ENCODE measurements at regions of chr16 and their contacts with region 1.

Region 1: GRCh38 chr16:4734063-4734729 is at the starts of genes ANKS3 and DNAAF8:
- DNase-seq: peak; percentile 95 to 99 (median 97)
- ATAC-seq: peak; percentile 98 to 99 (median 98)
- H3K4me3 ChIP-seq: peak within 1 kb of the TSS; percentile 61 to 99 (median 91)
- H3K27ac ChIP-seq: peak within 1 kb of the TSS; percentile 47 to 90 (median 78)
- H3K4me1 ChIP-seq: peaks cover 0 to 17% (median 15%) of the 10 kb centered on the region in 12 donors
- H3K27me3 ChIP-seq: no peaks in the 10 kb centered on the region
- CTCF ChIP-seq: no peak
- POLR2A ChIP-seq: peak in 1 of 2 donors; percentile 56
- total RNA-seq, gene ANKS3: 5.1 to 12.5 (median 8.6) TPM
- total RNA-seq, gene DNAAF8: 0.34 to 3.4 (median 0.70) TPM

Region 2: GRCh38 chr16:4640572-4641305 is 93.5 kb before region 1 on chr16:
- intact Hi-C with region 1: no loop called
- DNase-seq: no peak
- ATAC-seq: peak in 2 of 4 donors; percentile 28 to 33
- H3K4me3 ChIP-seq: no peak overlapping the region
- H3K27ac ChIP-seq: peak overlapping the region in 4 of 12 donors; percentile 0 to 40 (median 20)
- H3K4me1 ChIP-seq: peaks cover 0 to 27% (median 8%) of the 10 kb centered on the region in 12 donors
- H3K27me3 ChIP-seq: no peaks in the 10 kb centered on the region
- CTCF ChIP-seq: no peak
- POLR2A ChIP-seq: no peak

Region 3: DNA sequence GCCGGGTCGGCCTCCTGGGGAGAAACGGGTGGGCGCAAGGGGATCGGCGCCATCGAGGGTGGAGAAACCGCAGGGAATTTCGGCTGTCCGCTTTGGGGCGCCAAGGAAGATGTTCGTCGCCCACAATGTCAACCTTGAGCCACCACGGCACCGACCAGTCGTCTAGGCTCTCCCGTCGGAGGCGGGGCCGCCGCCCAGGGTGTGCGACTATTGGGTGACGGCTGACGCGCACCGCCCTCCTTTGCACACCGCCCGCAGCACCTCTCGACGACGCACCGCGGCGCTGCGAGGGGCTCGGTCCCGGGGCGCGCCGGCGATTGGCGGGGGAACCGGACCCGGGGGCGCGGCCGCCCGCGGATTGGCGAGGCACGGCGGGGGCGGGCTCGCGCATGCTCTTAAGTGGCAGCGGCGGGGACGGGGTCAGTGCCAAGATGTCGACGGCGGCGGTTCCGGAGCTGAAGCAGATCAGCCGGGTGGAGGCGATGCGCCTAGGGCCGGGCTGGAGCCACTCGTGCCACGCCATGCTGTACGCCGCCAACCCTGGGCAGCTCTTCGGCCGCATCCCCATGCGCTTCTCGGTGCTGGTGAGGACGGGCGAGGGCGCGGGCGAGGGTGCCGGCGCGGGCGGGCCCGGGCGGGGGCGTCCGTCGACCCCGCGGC is 40.8 kb before region 1 on chr16 and contains the start of gene NUDT16L1:
- intact Hi-C with region 1: loop called in 2 of 10 experiments (anchors 2 to 5 kb)
- DNase-seq: peak; percentile 97 to 99 (median 98)
- ATAC-seq: peak; percentile 86 to 95 (median 90)
- H3K4me3 ChIP-seq: peak within 1 kb of the TSS; percentile 72 to 100 (median 96)
- H3K27ac ChIP-seq: peak within 1 kb of the TSS; percentile 61 to 96 (median 88)
- H3K4me1 ChIP-seq: peaks cover 5 to 46% (median 26%) of the 10 kb centered on the region in 12 donors
- H3K27me3 ChIP-seq: no peaks in the 10 kb centered on the region
- CTCF ChIP-seq: peak in 10 of 12 donors; percentile 13 to 62 (median 40)
- POLR2A ChIP-seq: peak; percentile 13 to 80
- total RNA-seq, gene NUDT16L1: 33.1 to 65.2 (median 46.4) TPM

Region 4: DNA sequence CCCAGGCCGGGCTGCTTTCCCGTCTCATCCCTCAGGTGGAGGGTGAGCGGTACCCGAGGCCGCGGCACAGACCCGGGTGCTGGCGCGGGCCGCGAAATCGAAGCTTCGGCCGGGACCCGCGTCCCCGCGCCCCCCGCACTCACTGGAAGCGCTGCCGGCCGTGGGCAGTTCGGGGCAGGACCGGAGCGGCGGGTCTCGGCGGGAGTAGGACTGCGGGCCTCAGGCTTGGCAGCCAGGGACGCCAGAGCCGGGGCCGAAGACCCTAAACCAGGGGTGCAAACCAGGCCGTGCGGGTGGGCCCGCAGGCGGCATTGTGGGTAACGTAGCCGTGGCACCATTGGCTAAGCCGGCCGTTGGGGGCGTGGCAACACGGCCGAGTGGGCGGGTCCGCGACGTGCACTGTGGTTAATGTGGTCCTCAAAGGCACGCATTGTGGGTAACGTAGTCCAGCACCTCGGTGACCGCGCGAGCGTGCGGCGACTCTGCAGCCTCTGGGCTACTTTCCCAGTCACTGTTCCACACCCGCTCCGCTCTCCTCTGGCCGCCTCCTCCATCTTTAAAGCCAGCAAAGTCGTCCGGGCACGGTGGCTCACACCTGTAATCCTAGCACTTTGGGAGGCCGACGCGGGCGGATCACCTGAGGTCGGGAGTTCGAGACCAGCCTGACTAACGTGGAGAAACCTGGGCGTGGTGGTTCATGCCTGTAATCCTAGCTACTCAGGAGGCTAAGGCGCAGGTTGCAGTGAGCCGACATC is 32.9 kb after region 1 on chr16 and contains the start of gene ZNF500:
- intact Hi-C with region 1: loop called in 3 of 10 experiments (anchors 1 to 2 kb)
- DNase-seq: peak; percentile 98 to 99 (median 98)
- ATAC-seq: peak; percentile 92 to 97 (median 96)
- H3K4me3 ChIP-seq: peak within 1 kb of the TSS; percentile 76 to 97 (median 89)
- H3K27ac ChIP-seq: peak within 1 kb of the TSS; percentile 45 to 90 (median 88)
- H3K4me1 ChIP-seq: peaks cover 9 to 37% (median 32%) of the 10 kb centered on the region in 12 donors
- H3K27me3 ChIP-seq: no peaks in the 10 kb centered on the region
- CTCF ChIP-seq: no peak
- POLR2A ChIP-seq: peak in 1 of 2 donors; percentile 82
- total RNA-seq, gene ZNF500: 4.8 to 11.6 (median 6.5) TPM

Region 5: GRCh38 chr16:4870138-4870671 is 136.0 kb after region 1 on chr16:
- intact Hi-C with region 1: loop called in 1 of 10 experiments (anchors 10 kb)
- DNase-seq: peak in 1 of 5 donors; percentile 55
- ATAC-seq: peak in 2 of 4 donors; percentile 19 to 42
- H3K4me3 ChIP-seq: no peak overlapping the region
- H3K27ac ChIP-seq: no peak overlapping the region
- H3K4me1 ChIP-seq: peaks cover 0 to 29% (median 2%) of the 10 kb centered on the region in 12 donors
- H3K27me3 ChIP-seq: no peaks in the 10 kb centered on the region
- CTCF ChIP-seq: no peak
- POLR2A ChIP-seq: no peak

Region 6: DNA sequence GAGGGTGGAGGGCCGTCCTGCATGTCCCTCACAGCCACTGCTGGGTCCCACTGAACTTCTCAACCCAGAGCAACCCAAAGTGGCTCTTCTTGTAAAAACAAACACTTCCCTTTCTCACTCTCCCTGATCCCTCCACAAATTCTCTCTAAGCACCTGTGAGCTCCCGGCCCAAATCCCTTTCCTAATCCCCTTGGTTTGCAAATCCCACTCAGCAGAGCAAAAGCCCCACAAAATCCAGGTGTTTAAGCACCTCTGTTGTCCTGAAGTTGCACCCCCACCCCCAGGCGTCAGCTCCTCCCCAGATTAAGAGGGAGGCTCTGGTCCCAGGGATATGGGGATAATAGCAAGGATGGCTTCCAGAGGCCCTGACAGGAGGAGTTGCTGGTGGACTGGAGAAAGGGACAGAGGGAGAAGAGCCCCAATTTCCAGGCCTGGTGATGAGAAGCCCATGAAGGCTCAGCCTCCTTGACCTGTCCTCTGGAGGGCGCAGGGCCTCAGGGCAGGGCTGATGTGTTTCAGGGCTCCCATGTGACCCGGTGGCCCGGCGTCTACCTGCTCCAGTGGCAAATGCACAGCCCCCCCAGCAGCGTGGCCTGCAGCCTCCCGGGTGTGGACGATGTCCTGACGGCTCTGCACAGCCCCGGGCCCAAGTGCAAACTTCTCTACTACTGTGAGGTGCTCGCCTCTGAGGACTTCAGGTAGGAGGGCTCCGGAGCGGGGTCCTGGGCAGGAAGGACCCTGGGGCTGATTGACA is 276.6 kb after region 1 on chr16:
- intact Hi-C with region 1: no loop called
- DNase-seq: no peak
- ATAC-seq: no peak
- H3K4me3 ChIP-seq: no peak overlapping the region
- H3K27ac ChIP-seq: no peak overlapping the region
- H3K4me1 ChIP-seq: peaks cover 0 to 12% (median 0%) of the 10 kb centered on the region in 12 donors
- H3K27me3 ChIP-seq: no peaks in the 10 kb centered on the region
- CTCF ChIP-seq: no peak
- POLR2A ChIP-seq: no peak